ENCODE measurements at regions of chr22 and their contacts with region 1.

Region 1: GRCh38 chr22:30754971-30755756 is 60.5 kb downstream of the OSBP2 start:
- DNase-seq: peak; percentile 7
- H3K4me3 ChIP-seq: no peak overlapping the region
- H3K27me3 ChIP-seq: no peaks in the 10 kb centered on the region; the same call in 1 of the 2 replicates
- CTCF ChIP-seq: peak; percentile 89

Region 2: DNA sequence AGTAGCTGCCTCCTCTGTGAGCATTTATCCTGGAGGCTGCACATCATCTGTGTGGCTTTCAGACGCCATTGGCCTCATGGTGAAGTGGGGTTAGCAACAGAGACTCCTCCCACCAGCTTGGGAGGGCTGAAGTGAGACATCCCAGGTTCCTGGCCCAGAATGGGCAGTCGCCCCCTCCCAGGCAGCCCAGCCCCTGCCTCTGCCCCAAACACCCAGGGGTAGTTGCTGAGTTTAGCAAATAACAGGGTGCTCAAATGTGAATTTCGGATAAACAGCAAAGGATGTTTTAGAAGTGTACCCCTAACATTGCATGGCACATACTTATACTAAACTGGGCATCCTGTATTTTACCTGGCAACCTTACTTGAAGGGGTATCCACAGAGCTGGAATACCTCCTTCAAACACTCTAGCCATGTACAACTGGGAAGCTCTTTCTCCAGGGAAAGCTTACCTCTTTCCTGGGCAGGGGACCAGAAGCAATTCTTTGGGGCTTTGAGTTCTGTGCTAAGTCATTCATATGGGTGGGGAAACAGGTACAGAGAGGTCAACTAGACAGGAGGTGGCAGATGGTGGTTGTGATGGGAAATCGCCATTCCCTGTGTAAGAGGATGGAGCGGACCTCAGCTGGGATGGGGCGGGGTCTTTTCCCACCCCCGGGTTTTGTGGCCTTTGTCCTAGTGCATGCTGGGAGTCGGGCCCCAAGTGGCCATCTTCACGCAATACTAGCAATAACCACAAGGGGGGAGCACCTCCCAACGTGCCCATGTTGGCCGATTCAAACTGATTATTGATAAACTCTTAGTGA is 310.3 kb before region 1 on chr22:
- CTCF ChIA-PET with region 1: interaction called, 14 read pairs
- POLR2A ChIA-PET with region 1: no interaction called
- DNase-seq: no peak
- H3K4me3 ChIP-seq: no peak overlapping the region
- H3K27me3 ChIP-seq: 0 out of 2 replicates have a peak, but pooled peaks cover 4% of the 10 kb centered on the region
- CTCF ChIP-seq: peak; percentile 73

Region 3: DNA sequence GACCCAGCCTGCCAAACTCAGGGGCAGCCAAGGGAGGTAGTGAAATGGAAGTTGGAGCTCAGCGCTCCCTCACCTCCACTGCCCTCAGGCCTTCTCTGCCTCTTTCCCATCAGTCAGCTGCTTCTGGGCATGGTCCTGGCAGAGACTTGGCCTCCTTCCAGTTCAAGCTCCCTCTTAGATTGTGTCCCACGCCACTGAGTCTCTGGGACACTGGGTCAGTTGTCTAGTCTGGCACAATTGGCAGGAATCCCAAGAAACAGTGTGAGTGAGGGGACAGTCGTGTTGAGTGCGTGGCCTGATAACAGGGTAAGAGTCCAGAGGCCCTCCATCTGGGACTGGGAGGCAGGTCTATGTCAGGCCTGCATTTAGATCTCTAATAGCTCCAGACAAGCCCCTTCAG is 126.7 kb before region 1 on chr22:
- CTCF ChIA-PET with region 1: interaction called, 282 read pairs
- POLR2A ChIA-PET with region 1: no interaction called
- DNase-seq: no peak
- H3K4me3 ChIP-seq: no peak overlapping the region
- H3K27me3 ChIP-seq: no peaks in the 10 kb centered on the region
- CTCF ChIP-seq: no peak

Region 4: GRCh38 chr22:30667494-30668385 is 87.4 kb before region 1 on chr22 and contains the start of gene DUSP18:
- CTCF ChIA-PET with region 1: interaction called, 11 read pairs
- POLR2A ChIA-PET with region 1: no interaction called
- DNase-seq: peak; percentile 38
- H3K4me3 ChIP-seq: peak within 1 kb of the TSS; percentile 75
- H3K27me3 ChIP-seq: no peaks in the 10 kb centered on the region
- CTCF ChIP-seq: peak; percentile 48
- polyA plus RNA-seq, gene DUSP18: 12.4 and 18.6 TPM in 2 replicates

Region 5: DNA sequence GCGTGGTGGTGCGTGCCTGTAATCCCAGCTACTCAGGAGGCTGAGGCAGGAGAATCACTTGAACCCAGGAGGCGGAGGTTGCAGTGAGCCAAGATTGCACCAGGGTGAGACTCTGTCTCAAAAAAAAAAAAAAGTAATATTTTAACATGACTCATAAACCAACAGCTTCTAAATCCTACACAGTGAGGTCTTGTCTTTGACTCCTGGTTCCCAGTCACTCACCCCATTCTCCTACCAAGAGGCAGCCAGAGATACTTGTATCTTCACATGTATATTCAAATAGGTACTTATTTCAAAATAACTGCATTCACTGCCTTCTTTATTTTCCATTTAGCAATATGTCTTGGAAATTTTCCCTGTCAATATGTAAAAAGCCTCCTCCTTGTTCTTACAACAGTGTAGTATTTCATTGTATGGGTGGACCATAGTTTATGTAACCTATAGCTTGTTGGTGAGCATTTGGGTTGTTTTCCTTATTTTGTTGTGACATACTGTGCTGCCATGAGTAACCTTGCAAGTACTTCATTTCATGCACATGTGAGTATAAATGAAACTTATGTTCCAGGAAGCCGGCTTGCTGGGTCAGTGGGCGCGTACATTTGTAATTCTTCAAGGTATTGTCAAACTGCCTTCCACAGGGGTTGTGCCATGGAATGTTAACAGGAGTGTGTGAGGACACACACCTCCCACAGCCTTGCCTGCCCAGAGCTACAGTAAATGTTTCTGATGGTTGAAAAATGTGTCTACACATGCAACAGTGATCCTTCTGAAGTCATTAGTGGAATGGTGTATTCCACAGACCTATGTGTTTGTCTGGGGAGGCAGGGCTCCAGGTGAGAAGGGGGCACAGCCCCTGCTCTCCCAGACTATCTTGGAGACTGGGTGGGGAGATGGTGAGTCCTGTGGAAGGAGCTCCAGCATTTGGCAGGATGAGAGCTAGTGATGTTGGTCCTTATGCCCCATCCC is 12.6 kb before region 1 on chr22:
- CTCF ChIA-PET with region 1: interaction called, 41 read pairs
- POLR2A ChIA-PET with region 1: no interaction called
- DNase-seq: no peak
- H3K4me3 ChIP-seq: no peak overlapping the region
- H3K27me3 ChIP-seq: no peaks in the 10 kb centered on the region
- CTCF ChIP-seq: no peak

Region 6: GRCh38 chr22:30770716-30771115 is 15.6 kb after region 1 on chr22:
- CTCF ChIA-PET with region 1: no interaction called
- POLR2A ChIA-PET with region 1: no interaction called
- DNase-seq: no peak
- H3K4me3 ChIP-seq: no peak overlapping the region
- H3K27me3 ChIP-seq: no peaks in the 10 kb centered on the region
- CTCF ChIP-seq: no peak

Measured in BJ (cell line).